H1 (cell line): ENCODE measurements at regions of chr15 and their contacts with region 1.

Region 1: GRCh38 chr15:27725731-27726130 is 373.4 kb downstream of the OCA2 start:
- DNase-seq: no peak
- H3K4me3 ChIP-seq: no peak overlapping the region
- H3K27ac ChIP-seq: no peak overlapping the region
- H3K4me1 ChIP-seq: peaks cover 0 to 3% (median under 1%) of the 10 kb centered on the region in 4 experiments; a peak in 2 of 7 replicates
- H3K27me3 ChIP-seq: no peaks in the 10 kb centered on the region
- CTCF ChIP-seq: no peak
- EP300 ChIP-seq: no peak
- POLR2A ChIP-seq: no peak
- RAD21 ChIP-seq: no peak

Region 2: GRCh38 chr15:27674826-27675225 is 50.9 kb before region 1 on chr15:
- CTCF ChIA-PET with region 1: no interaction called
- POLR2A ChIA-PET with region 1: no interaction called
- DNase-seq: peak in 1 of 2 experiments; percentile 17
- H3K4me3 ChIP-seq: no peak overlapping the region
- H3K27ac ChIP-seq: no peak overlapping the region
- H3K4me1 ChIP-seq: peaks cover 0 to 14% (median 4%) of the 10 kb centered on the region in 4 experiments; a peak in 5 of 7 replicates
- H3K27me3 ChIP-seq: peaks cover 0 to 6% (median 1%) of the 10 kb centered on the region in 4 experiments; a peak in 4 of 7 replicates
- CTCF ChIP-seq: no peak
- EP300 ChIP-seq: no peak
- POLR2A ChIP-seq: no peak
- RAD21 ChIP-seq: no peak

Region 3: GRCh38 chr15:27714675-27715074 is 11.1 kb before region 1 on chr15:
- CTCF ChIA-PET with region 1: interaction called, 12 read pairs
- POLR2A ChIA-PET with region 1: no interaction called
- DNase-seq: peak in 1 of 2 experiments; percentile 65
- H3K4me3 ChIP-seq: no peak overlapping the region
- H3K27ac ChIP-seq: no peak overlapping the region
- H3K4me1 ChIP-seq: no peaks in the 10 kb centered on the region; a peak in 1 of 7 replicates
- H3K27me3 ChIP-seq: no peaks in the 10 kb centered on the region
- CTCF ChIP-seq: peak; percentile 69 to 78 (median 74)
- EP300 ChIP-seq: no peak
- POLR2A ChIP-seq: no peak
- RAD21 ChIP-seq: peak; percentile 65 to 77